ENCODE measurements at regions of chr6 and their contacts with region 1.

Region 1: DNA sequence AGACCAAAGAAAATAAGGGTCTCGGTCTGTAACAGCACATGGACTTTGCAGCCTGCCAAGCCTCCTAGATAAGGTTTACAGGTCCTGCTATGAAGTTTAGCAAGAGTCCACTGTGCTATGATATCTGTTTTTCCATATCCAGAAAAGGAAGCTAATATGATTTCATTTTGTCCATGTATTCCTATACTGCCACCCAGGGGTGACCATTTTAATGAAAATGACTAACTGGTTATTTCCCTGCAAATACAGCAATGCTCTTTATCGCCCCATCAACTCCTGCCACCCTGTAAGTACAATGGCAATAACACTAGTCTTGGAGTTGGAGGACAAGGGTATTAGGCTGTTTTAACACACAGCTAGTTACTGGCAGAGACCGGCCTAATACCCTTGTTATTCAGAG is 115.1 kb upstream of the GLP1R start:
- DNase-seq: peak; percentile 36 to 66 (median 64)
- H3K4me3 ChIP-seq: no peak overlapping the region
- H3K27ac ChIP-seq: no peak overlapping the region
- H3K4me1 ChIP-seq: no peaks in the 10 kb centered on the region
- H3K27me3 ChIP-seq: peaks cover 0 to 5% (median 0%) of the 10 kb centered on the region in 5 experiments

Region 2: DNA sequence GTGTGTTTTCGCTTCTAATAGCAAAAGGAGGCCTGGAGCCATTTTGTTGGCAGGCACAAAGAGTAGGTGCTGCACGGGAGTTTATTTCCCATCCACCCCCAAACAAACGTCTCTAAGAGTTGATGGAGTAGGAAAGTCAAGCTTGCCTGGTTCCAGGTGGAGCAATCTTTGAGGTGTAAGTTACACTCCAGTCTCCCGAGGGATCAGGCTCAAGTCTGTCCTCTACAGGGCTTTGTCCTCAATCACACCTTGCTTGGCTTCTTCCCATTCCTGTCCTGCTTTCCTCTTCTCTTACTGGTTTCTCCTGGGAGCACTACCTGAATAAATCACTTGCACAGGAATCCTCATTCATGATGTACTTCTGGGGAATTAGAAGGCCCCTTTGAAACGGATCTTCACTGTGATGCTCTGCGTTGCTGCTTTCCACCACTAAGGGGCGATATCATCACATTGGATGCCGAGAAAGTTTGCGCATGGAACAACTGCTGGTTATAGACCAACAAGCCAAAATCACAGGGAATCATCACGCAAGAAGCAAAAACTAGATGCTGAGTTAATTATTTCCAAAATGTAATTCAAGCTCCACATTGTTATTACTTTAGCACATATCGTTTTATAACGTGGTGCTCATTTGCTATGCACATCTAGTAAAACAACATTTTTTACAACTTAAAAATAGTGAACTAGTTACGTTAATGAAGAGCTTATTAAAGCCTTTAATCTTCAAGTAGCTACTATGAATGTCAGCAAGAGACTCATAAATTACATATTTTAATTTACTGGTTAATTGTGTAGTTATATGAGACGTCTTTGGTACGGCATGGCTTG is 61.5 kb before region 1 on chr6:
- CTCF ChIA-PET with region 1: interaction called, 17 read pairs
- POLR2A ChIA-PET with region 1: no interaction called
- DNase-seq: peak; percentile 51 to 77 (median 68)
- H3K4me3 ChIP-seq: no peak overlapping the region
- H3K27ac ChIP-seq: no peak overlapping the region
- H3K4me1 ChIP-seq: peaks cover 0 to 10% (median 8%) of the 10 kb centered on the region in 4 experiments
- H3K27me3 ChIP-seq: peaks cover 0 to 14% (median 3%) of the 10 kb centered on the region in 5 experiments